ENCODE measurements at regions of chr6 and their contacts with region 1.

Region 1: DNA sequence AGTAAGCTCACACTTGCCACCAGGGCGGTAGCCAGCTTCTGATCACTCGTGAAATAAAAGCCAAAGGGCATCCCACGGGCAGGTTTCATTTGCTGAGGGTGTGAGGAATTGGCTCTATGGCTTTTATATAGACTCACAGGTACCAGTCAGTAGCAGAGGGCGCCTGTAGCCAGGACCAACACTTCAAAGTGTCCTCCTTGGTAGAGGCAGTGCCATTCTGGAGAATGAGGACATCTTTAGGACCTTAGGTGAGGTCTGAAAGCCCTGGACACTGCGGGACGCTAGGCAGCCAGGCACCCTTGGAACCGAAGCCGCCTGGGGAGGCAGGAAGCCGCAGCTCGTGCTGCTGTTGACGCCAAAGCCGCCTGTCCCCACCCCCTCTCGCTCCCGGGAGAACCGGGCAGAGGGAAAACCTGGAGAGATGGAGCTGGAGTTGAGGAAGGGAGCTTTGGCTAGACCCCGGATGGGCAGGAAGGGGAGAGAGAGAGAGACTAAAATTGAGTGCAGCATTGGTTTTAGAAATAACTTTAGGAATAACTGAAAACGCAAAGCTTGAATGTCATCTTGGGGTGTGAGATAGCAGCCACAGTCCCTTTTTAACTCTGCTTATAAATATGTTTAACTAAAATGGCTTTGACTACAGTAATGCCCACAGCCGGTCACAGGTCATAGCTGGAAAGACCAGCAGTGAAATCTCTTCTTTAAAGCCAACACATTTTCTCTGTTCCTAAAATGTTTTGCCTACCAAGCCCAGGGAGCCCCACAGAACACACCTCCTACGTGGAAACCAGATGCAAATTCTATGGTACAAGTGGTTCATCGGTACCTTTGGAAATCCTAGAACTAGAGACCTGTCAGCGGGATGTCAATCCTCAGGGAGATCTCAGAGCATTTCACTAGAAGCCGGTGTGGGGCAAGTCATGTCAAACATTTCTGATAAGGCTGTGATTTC is 128.5 kb upstream of the CDYL start:
- DNase-seq: peak; percentile 80
- H3K4me3 ChIP-seq: peak overlapping the region; percentile 9 to 46 (median 28)
- H3K27ac ChIP-seq: peak overlapping the region; percentile 61 to 77 (median 66)
- H3K4me1 ChIP-seq: peaks cover 5 to 27% (median 7%) of the 10 kb centered on the region in 4 donors
- H3K27me3 ChIP-seq: no peaks in the 10 kb centered on the region
- CTCF ChIP-seq: peak in 2 of 5 experiments; percentile 2 to 12
- EP300 ChIP-seq: no peak
- POLR2A ChIP-seq: peak; percentile 44

Region 2: GRCh38 chr6:4775584-4776494 is 128.1 kb after region 1 on chr6 and contains the start of gene CDYL:
- in situ Hi-C with region 1: no loop called
- intact Hi-C with region 1: loop called (anchors 1 kb)
- DNase-seq: peak; percentile 92
- H3K4me3 ChIP-seq: peak within 1 kb of the TSS; percentile 61 to 87 (median 74)
- H3K27ac ChIP-seq: peak within 1 kb of the TSS; percentile 90 to 93 (median 92)
- H3K4me1 ChIP-seq: peaks cover 9 to 24% (median 15%) of the 10 kb centered on the region in 4 donors
- H3K27me3 ChIP-seq: no peaks in the 10 kb centered on the region
- CTCF ChIP-seq: peak in 4 of 5 experiments; percentile 26 to 52 (median 34)
- EP300 ChIP-seq: no peak
- POLR2A ChIP-seq: peak; percentile 6
- total RNA-seq, gene CDYL: 23.6 to 40.8 (median 30.0) TPM